Activated CD4-positive, alpha-beta T cell treated with anti-CD3 and anti-CD28 coated beads, Interleukin-2, amount 10 ng/mL, durations not matched to agents 24 days and 14 days (primary cell): ENCODE measurements at regions of chr4 and their contacts with region 1.

Region 1: DNA sequence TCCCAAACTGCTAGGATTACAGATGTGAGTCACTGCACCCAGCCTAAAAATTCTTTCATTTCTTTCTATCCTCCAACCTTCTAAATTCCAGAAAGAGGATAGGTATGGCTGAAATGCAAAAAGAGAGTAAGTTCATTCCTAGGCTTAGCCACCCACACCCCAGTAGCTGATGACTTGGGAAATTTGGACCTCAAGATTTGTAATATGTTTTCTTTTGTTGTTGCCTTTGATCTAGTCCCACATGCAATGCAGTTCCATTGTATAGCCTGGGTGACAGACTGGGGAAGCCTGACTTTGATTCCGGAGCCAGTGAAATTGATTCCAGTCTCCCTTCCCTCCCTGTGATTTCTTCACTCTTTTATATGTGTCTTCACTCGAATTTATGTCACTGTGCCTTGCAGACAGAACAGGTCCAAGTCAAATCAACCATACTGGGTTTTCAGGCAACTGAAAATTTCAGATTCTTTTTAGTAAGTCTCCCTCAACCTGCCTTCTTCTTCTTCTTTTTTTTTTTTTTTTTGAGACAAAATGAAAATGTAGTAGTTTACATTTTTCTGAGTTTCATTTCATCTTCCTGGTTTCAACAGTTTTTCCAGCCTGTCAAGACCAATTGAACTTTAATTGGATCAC is 176.2 kb upstream of the RBPJ start:
- DNase-seq: no peak
- H3K4me3 Mint-ChIP-seq: peak overlapping the region; percentile 56
- H3K27ac Mint-ChIP-seq: peak overlapping the region; percentile 98
- H3K4me1 Mint-ChIP-seq: peaks cover 53% of the 10 kb centered on the region
- H3K27me3 Mint-ChIP-seq: no peaks in the 10 kb centered on the region

Region 2: GRCh38 chr4:25466966-25467697 is 677.5 kb before region 1 on chr4:
- intact Hi-C with region 1: no loop called
- DNase-seq: no peak
- H3K4me3 Mint-ChIP-seq: no peak overlapping the region
- H3K27ac Mint-ChIP-seq: no peak overlapping the region
- H3K4me1 Mint-ChIP-seq: no peaks in the 10 kb centered on the region
- H3K27me3 Mint-ChIP-seq: no peaks in the 10 kb centered on the region

Region 3: DNA sequence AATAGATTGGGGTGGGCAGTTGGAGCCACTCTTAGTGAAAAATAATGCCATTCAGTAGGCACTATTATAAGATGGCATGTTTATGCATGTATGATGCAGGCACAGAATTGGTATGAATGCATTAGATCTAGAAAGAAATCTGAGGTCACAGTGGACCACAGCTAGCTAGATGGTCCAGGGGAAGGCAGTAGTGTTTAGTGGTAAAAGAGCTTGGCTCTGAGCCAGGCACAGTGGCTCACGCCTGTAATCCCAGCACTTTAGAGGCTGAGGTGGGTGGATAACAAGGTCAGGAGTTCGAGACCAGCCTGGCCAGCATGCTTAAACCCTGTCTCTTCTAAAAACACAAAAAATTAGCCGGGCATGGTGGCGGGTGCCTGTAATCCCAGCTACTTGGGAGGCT is 532.2 kb before region 1 on chr4:
- intact Hi-C with region 1: no loop called
- DNase-seq: no peak
- H3K4me3 Mint-ChIP-seq: no peak overlapping the region
- H3K27ac Mint-ChIP-seq: no peak overlapping the region
- H3K4me1 Mint-ChIP-seq: no peaks in the 10 kb centered on the region
- H3K27me3 Mint-ChIP-seq: no peaks in the 10 kb centered on the region

Region 4: DNA sequence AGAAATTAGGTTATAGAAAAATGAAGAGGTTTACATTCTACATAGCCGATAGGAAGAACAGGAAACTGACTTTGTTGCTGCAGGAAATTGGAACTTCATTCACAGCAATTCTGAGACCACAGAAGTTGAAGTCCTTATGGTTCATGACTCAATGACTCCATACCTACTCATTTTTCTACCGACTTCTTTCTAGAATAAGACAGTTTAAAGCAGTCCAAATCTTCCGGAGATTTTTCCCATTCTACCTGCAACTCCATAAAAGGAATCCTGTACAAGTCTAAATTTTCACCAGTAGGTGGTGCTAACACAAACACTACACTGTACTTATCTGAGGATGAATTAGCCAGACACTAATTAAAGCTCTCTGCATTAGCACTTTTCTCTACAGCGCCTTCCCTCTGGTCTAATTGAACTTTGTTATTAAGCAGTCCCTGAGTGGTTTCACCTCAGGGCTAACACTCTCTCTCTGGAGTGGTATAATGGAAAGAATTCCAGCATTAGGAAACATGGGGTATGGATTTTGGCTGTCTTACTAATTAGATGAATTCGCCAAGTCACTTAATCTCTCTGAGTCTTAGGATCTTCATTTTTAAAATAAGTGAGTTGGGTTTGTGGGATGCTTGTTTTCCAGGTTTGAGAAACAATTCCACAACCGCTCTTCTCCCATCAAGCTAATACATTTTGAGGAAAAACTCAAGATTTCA is 62.7 kb before region 1 on chr4:
- intact Hi-C with region 1: loop called (anchors 1 kb)
- DNase-seq: peak; percentile 64
- H3K4me3 Mint-ChIP-seq: peak overlapping the region; percentile 15
- H3K27ac Mint-ChIP-seq: peak overlapping the region; percentile 89
- H3K4me1 Mint-ChIP-seq: peaks cover 68% of the 10 kb centered on the region
- H3K27me3 Mint-ChIP-seq: no peaks in the 10 kb centered on the region

Region 5: DNA sequence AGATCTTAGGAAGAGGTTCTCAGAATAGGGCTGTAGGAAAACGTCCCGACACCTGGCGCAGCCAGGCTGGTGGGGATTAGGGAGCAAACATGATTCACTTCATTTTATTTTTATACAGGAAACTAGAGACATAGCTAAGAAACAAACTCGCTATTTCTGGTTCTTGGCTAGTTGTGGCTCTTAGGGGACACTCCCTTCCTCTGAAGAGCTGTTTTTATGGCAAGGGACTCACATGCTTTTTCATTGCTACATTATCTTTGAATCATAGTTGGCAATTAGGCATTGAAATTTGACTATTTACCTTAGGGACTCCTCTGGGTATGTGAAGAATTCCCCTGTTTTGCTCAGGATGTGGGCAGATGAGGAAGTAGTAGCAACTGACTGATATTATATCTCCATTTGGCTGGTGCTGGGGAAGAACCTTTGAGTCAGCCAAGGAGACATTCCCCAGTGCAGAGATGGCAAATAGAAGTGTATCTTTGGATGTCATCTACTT is 56.2 kb before region 1 on chr4:
- intact Hi-C with region 1: loop called (anchors 1 kb)
- DNase-seq: peak; percentile 77
- H3K4me3 Mint-ChIP-seq: peak overlapping the region; percentile 80
- H3K27ac Mint-ChIP-seq: peak overlapping the region; percentile 99
- H3K4me1 Mint-ChIP-seq: peaks cover 68% of the 10 kb centered on the region
- H3K27me3 Mint-ChIP-seq: no peaks in the 10 kb centered on the region